HepG2 (cell line): ENCODE measurements at regions of chr19 and their contacts with region 1.

Region 1: GRCh38 chr19:19404879-19405860 is at the start of gene GATAD2A:
- DNase-seq: peak; percentile 75
- ATAC-seq: peak; percentile 86
- H3K4me3 ChIP-seq: peak within 1 kb of the TSS; percentile 72 to 94 (median 76)
- H3K27ac ChIP-seq: peak within 1 kb of the TSS; percentile 69
- H3K4me1 ChIP-seq: peaks cover 59% of the 10 kb centered on the region
- H3K27me3 ChIP-seq: no peaks in the 10 kb centered on the region; a peak in 1 of 5 replicates
- CTCF ChIP-seq: peak; percentile 61
- EP300 ChIP-seq: no peak
- POLR2A ChIP-seq: peak; percentile 33 to 80; a peak in 2 of 4 replicates
- RAD21 ChIP-seq: peak; percentile 44
- total RNA-seq, gene GATAD2A: 25.1 and 28.6 TPM in 2 replicates

Region 2: DNA sequence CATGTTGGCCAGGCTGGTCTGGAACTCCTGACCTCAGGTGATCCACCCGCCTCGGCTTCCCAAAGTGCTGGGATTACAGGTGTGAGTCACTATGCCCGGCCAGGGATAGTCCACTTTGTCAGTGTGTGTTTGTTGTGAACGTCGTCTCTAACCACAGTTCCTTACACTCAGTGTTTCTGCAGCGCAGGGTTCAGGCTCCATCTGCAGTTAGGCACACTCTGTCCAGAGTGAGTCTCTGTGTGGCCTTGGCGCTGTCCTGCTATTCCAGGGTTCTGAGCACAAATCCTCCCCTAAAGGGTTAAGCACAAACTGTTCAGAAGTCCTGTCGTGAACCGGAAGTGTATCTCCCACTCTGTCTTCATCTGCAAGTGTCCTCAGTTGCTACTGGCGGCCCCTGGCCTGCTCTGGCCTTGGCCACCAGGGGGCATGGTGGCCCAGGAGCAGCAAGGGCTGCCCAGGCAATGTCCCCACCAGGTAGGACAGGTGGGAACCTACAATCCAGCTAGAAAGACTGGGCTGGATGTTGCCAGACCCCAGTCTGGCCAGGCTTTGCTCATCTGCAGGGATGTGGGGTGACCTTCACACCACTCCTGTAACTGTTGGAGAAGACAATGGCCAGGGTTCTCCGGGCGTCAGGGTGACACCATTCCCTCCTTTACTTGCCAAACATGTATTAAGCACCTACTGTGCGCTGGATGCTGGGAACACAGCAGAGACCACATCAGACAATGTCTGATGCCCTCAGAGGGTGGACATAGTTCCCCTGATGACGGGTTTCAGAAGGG is 38.4 kb before region 1 on chr19:
- CTCF ChIA-PET with region 1: interaction called, 12 read pairs
- POLR2A ChIA-PET with region 1: interaction called, 15 read pairs
- in situ Hi-C with region 1: loop called (anchors 5 kb)
- intact Hi-C with region 1: loop called (anchors 1 kb)
- DNase-seq: peak; percentile 92
- ATAC-seq: peak; percentile 89
- H3K4me3 ChIP-seq: peak overlapping the region; percentile 34 to 67 (median 50)
- H3K27ac ChIP-seq: peak overlapping the region; percentile 54
- H3K4me1 ChIP-seq: peaks cover 52% of the 10 kb centered on the region
- H3K27me3 ChIP-seq: no peaks in the 10 kb centered on the region
- CTCF ChIP-seq: peak; percentile 100
- EP300 ChIP-seq: no peak
- POLR2A ChIP-seq: peak; percentile 20 to 52; a peak in 2 of 4 replicates
- RAD21 ChIP-seq: peak; percentile 95

Region 3: GRCh38 chr19:19372656-19373416 is 32.3 kb before region 1 on chr19:
- CTCF ChIA-PET with region 1: interaction called, 12 read pairs
- POLR2A ChIA-PET with region 1: interaction called, 25 read pairs
- in situ Hi-C with region 1: loop called (anchors 5 kb)
- intact Hi-C with region 1: no loop called
- DNase-seq: peak; percentile 90
- ATAC-seq: peak; percentile 96
- H3K4me3 ChIP-seq: peak overlapping the region; percentile 19 to 48 (median 37); a peak in 5 of 6 replicates
- H3K27ac ChIP-seq: peak overlapping the region; percentile 63
- H3K4me1 ChIP-seq: peaks cover 66% of the 10 kb centered on the region
- H3K27me3 ChIP-seq: no peaks in the 10 kb centered on the region
- CTCF ChIP-seq: no peak
- EP300 ChIP-seq: peak in 1 of 2 experiments; percentile 44; a peak in 1 of 4 replicates
- POLR2A ChIP-seq: peak; percentile 39 to 74; a peak in 2 of 4 replicates
- RAD21 ChIP-seq: no peak

Region 4: DNA sequence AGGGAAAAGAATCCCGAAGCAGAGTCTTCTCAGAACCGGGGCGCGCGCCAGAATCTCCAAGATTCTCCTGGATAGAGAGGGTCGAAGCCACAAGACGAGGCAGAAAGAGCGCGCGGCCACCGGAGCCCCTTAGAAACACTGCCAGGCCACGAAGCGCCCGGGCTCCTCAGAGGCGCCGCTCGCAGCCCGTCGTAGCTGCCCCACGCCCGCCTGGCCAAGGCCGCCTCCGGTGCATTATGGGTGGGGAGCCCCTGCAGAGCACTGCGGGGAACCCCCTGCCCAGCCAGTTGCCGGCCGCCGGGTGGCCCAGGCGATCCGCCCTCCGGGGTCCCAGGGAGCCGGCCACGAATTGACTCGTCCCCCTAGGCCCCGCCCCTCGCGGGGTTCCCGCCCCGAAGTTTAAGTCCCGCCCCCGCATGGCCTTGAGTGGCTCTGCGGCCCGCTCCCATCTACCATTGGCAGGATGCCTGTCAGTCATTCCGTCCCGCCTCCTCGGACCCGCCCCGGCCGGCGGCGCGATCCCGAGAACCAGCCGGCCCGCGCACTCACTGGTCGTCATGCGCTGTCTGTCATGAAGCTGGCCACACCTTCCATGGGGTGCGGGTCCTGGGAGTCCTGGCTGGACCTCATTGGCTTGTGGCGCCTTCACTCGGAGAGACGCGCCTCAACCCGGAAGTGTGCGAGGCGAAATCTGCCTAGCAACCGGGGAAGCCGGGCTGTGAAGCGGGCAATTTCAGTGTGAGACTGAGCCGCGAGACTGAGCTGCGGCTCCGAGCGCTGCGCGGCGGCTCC is 19.9 kb before region 1 on chr19:
- CTCF ChIA-PET with region 1: no interaction called
- POLR2A ChIA-PET with region 1: interaction called, 24 read pairs
- in situ Hi-C with region 1: no loop called
- intact Hi-C with region 1: loop called (anchors 2 kb)
- DNase-seq: peak; percentile 99
- ATAC-seq: peak; percentile 96
- H3K4me3 ChIP-seq: peak overlapping the region; percentile 49 to 87 (median 75); a peak in 5 of 6 replicates
- H3K27ac ChIP-seq: peak overlapping the region; percentile 86
- H3K4me1 ChIP-seq: peaks cover 65% of the 10 kb centered on the region
- H3K27me3 ChIP-seq: no peaks in the 10 kb centered on the region; a peak in 1 of 5 replicates
- CTCF ChIP-seq: peak; percentile 44
- EP300 ChIP-seq: peak in 1 of 2 experiments; percentile 65; a peak in 1 of 4 replicates
- POLR2A ChIP-seq: peak in 1 of 2 experiments; percentile 49; a peak in 2 of 4 replicates
- RAD21 ChIP-seq: peak; percentile 58

Region 5: GRCh38 chr19:19427944-19428343 is 22.8 kb after region 1 on chr19:
- CTCF ChIA-PET with region 1: no interaction called
- POLR2A ChIA-PET with region 1: no interaction called
- in situ Hi-C with region 1: no loop called
- intact Hi-C with region 1: no loop called
- DNase-seq: no peak
- ATAC-seq: no peak
- H3K4me3 ChIP-seq: no peak overlapping the region
- H3K27ac ChIP-seq: no peak overlapping the region
- H3K4me1 ChIP-seq: peaks cover 24% of the 10 kb centered on the region
- H3K27me3 ChIP-seq: no peaks in the 10 kb centered on the region
- CTCF ChIP-seq: no peak
- EP300 ChIP-seq: no peak
- POLR2A ChIP-seq: no peak
- RAD21 ChIP-seq: no peak

Region 6: GRCh38 chr19:19488875-19489690 is 83.9 kb after region 1 on chr19:
- CTCF ChIA-PET with region 1: no interaction called
- POLR2A ChIA-PET with region 1: interaction called, 3 read pairs
- in situ Hi-C with region 1: no loop called
- intact Hi-C with region 1: loop called (anchors 5 kb)
- DNase-seq: peak; percentile 60
- ATAC-seq: peak; percentile 25
- H3K4me3 ChIP-seq: no peak overlapping the region
- H3K27ac ChIP-seq: peak overlapping the region; percentile 16
- H3K4me1 ChIP-seq: peaks cover 47% of the 10 kb centered on the region
- H3K27me3 ChIP-seq: no peaks in the 10 kb centered on the region; a peak in 1 of 5 replicates
- CTCF ChIP-seq: no peak
- EP300 ChIP-seq: no peak
- POLR2A ChIP-seq: no peak
- RAD21 ChIP-seq: no peak